Activated B cell treated with CpG ODN at 0.5 μM for 24 hours (primary cell): ENCODE measurements at regions of chr5 and their contacts with region 1.

Region 1: DNA sequence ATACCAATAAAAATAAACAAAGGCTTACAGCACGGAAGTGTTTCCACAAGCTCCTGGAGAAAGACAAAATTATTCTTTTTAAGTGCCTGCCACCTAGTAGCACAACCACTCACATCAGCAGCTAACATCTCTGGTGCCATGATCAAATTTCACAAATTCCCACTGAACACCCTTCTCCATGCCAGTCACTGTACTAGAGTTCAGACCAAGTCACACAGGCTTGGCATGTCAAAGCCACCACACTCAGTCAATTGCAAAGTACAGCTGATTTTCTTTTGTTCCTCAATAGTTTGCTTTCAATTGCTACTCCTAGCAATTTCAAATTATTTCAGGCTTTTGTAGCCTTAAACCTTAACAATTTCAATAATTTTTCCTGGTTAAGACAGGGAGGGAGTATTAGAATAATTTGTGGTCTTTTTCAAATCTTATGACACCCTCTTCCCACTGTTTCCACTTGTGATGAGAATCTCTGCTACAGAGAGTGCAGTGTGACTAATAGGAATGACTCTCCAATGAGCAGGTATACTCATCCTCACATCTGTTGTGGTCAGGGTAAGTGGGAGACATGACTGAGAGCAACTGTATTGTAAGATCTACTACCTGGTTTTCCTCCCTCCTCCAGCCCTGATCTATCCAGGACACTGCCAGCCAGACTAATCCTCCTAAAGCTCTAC is 46.2 kb downstream of the RNF145 start:
- DNase-seq: no peak
- ATAC-seq: no peak
- H3K4me3 Mint-ChIP-seq: no peak overlapping the region
- H3K27ac Mint-ChIP-seq: peak overlapping the region; percentile 4
- H3K4me1 Mint-ChIP-seq: peaks cover 10% of the 10 kb centered on the region
- H3K27me3 Mint-ChIP-seq: no peaks in the 10 kb centered on the region
- CTCF ChIP-seq: no peak

Region 2: GRCh38 chr5:158245513-158245912 is 917.7 kb before region 1 on chr5:
- CTCF ChIA-PET with region 1: no interaction called
- POLR2A ChIA-PET with region 1: interaction called, 10 read pairs
- intact Hi-C with region 1: no loop called
- DNase-seq: no peak
- ATAC-seq: no peak
- H3K4me3 Mint-ChIP-seq: no peak overlapping the region
- H3K27ac Mint-ChIP-seq: no peak overlapping the region
- H3K4me1 Mint-ChIP-seq: peaks cover 2% of the 10 kb centered on the region
- H3K27me3 Mint-ChIP-seq: peaks cover 3% of the 10 kb centered on the region
- CTCF ChIP-seq: no peak

Region 3: DNA sequence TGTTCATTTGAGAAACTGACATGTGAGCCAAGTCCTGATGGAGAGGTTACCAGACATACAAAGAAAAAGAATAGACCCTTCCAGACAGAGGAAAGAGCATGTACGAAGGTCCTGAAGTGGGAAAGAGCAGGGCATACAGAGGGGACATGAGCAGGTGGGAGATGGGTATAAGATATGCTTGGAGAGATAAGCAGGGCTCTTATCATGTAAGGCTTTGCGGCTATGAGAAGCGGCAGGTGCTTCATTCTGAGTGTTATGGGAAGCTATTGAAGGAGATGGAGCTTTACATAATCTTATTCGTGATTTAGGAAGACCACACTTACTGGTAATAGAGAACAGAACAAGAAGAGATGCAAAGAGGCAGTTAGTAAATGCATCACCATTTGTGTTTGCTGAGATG is 480.5 kb before region 1 on chr5:
- CTCF ChIA-PET with region 1: no interaction called
- POLR2A ChIA-PET with region 1: no interaction called
- intact Hi-C with region 1: no loop called
- DNase-seq: no peak
- ATAC-seq: no peak
- H3K4me3 Mint-ChIP-seq: no peak overlapping the region
- H3K27ac Mint-ChIP-seq: no peak overlapping the region
- H3K4me1 Mint-ChIP-seq: peaks cover 17% of the 10 kb centered on the region
- H3K27me3 Mint-ChIP-seq: no peaks in the 10 kb centered on the region
- CTCF ChIP-seq: no peak

Region 4: DNA sequence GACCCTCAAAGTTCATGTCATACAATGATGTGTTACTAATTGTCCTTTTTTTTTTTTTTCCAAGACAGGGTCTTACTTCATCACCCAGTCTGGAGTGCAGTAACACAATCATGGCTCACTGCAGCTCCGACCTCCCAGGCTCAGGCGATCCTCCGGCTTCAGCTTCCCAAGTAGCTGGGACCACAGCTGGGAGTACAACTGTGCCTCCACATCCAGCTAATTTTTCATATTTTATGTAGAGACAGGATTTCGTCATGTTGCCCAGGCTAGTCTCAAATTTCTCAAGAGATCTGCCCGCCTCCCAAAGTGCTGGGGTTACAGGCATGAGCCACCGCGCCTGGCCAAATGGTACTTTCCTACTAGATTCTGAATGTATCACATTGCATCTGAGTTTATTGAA is 14.1 kb before region 1 on chr5:
- CTCF ChIA-PET with region 1: no interaction called
- POLR2A ChIA-PET with region 1: no interaction called
- intact Hi-C with region 1: no loop called
- DNase-seq: no peak
- ATAC-seq: no peak
- H3K4me3 Mint-ChIP-seq: no peak overlapping the region
- H3K27ac Mint-ChIP-seq: no peak overlapping the region
- H3K4me1 Mint-ChIP-seq: peaks cover 6% of the 10 kb centered on the region
- H3K27me3 Mint-ChIP-seq: no peaks in the 10 kb centered on the region
- CTCF ChIP-seq: no peak

Region 5: GRCh38 chr5:160298189-160298588 is 1135.0 kb after region 1 on chr5:
- CTCF ChIA-PET with region 1: no interaction called
- POLR2A ChIA-PET with region 1: no interaction called
- intact Hi-C with region 1: no loop called
- DNase-seq: no peak
- ATAC-seq: no peak
- H3K4me3 Mint-ChIP-seq: no peak overlapping the region
- H3K27ac Mint-ChIP-seq: no peak overlapping the region
- H3K4me1 Mint-ChIP-seq: no peaks in the 10 kb centered on the region
- H3K27me3 Mint-ChIP-seq: peaks cover 5% of the 10 kb centered on the region
- CTCF ChIP-seq: no peak